ENCODE measurements at regions of chr7 and their contacts with region 1.

Region 1: DNA sequence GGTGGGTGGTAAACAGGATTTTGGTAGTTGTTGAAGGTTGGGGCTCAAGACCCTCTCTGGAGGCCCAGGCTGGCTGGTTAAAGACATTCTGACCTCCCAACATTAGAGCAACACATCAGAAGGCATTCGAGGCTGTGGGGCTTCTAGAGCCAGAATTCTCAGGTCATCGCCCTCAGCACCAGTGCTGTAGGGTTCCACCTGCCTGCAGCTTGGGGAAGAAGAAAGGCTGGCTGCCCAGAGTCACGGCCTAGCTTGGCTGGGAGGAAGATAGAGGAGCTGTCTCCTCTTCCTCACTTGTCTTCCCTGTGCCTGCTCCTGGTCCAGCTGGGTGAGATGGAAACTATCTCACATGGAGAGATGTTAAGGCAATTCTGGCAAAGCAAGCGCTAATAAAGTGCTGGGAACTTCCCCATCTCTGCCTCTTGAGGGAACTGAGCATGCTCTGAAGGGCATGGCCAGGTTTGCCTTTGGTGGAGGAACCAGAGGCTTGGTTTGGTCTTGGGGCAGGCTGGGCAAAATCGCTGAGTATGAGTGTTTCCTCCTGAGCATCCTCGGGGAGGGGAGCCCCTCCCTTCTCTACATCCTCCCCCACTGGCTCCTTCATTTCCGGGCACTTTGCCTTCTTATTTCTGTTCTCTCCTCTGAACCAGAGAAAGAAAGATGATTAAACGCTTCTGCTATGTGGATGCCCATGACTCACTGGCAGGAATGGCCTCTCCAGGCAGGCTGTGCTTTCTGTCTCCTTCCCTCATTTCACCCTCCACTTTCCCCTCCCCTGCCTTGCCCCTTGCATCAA is 509.0 kb upstream of the PODXL start:
- DNase-seq: no peak

Region 2: GRCh38 chr7:132019703-132020102 is 45.7 kb before region 1 on chr7:
- intact Hi-C with region 1: no loop called
- DNase-seq: no peak

Region 3: GRCh38 chr7:132145466-132145865 is 80.1 kb after region 1 on chr7:
- intact Hi-C with region 1: no loop called
- DNase-seq: no peak

Region 4: GRCh38 chr7:132206594-132206993 is 141.2 kb after region 1 on chr7:
- intact Hi-C with region 1: loop called (anchors 5 kb)
- DNase-seq: no peak

Region 5: GRCh38 chr7:132239422-132239994 is 174.1 kb after region 1 on chr7:
- intact Hi-C with region 1: no loop called
- DNase-seq: peak; percentile 26

Region 6: GRCh38 chr7:132509643-132510042 is 444.3 kb after region 1 on chr7:
- intact Hi-C with region 1: loop called (anchors 5 kb)
- DNase-seq: no peak